CD8-positive, alpha-beta T cell (primary cell): ENCODE measurements at regions of chrX and their contacts with region 1.

Region 1: GRCh38 chrX:136694431-136695087 is 46.6 kb downstream of the CD40LG start:
- DNase-seq: peak in 5 of 9 experiments; percentile 13 to 81 (median 32)
- ATAC-seq: peak; percentile 66
- H3K4me3 ChIP-seq: no peak overlapping the region
- H3K4me3 Mint-ChIP-seq: peak overlapping the region; percentile 63
- H3K27ac ChIP-seq: peak overlapping the region; percentile 69 to 71
- H3K27ac Mint-ChIP-seq: peak overlapping the region; percentile 97
- H3K4me1 ChIP-seq: peaks cover 67% of the 10 kb centered on the region
- H3K4me1 Mint-ChIP-seq: peaks cover 71% of the 10 kb centered on the region
- H3K27me3 ChIP-seq: no peaks in the 10 kb centered on the region
- H3K27me3 Mint-ChIP-seq: no peaks in the 10 kb centered on the region
- CTCF ChIP-seq: peak; percentile 71

Region 2: DNA sequence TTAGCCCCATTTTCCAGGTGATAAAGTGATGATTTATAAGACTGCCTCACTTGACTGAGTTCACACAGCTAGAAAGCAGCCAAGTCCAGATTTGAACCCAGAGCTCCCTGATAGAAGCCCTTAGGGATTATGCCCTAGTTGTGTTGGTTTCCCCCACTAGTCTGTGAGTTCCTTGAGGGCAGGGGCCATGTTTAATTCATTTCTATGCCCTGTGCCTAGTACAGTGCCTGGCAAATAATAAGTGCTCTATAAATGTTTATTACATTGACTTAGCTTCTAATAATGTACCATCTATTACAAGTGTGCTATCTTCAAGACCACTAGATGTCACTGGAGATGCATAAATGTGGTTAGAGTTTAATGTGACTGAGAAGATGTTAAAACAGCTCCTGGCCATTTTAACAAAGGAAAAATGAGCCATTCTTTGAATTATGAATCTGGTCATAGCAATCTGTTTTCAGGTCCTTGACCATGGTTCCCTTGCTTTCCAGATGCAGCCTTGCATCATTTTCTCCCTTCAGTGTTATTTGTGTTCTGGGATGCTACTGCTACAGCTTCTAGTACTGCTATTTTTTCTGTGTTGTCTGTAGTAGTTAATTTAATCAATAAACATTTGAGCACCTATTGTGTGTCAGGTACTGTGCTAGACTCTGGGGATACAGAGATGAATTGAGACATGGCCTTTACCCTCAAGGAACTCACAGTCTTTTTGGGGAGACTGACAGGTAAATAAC is 666.1 kb before region 1 on chrX:
- CTCF ChIA-PET with region 1: interaction called, 3 read pairs
- POLR2A ChIA-PET with region 1: no interaction called
- intact Hi-C with region 1: loop called in 1 of 2 experiments (anchors 5 kb)
- DNase-seq: peak in 2 of 9 experiments; percentile 52 to 68
- ATAC-seq: peak; percentile 42
- H3K4me3 ChIP-seq: no peak overlapping the region
- H3K4me3 Mint-ChIP-seq: no peak overlapping the region
- H3K27ac ChIP-seq: no peak overlapping the region
- H3K27ac Mint-ChIP-seq: no peak overlapping the region
- H3K4me1 ChIP-seq: no peaks in the 10 kb centered on the region
- H3K4me1 Mint-ChIP-seq: no peaks in the 10 kb centered on the region
- H3K27me3 ChIP-seq: no peaks in the 10 kb centered on the region
- H3K27me3 Mint-ChIP-seq: no peaks in the 10 kb centered on the region
- CTCF ChIP-seq: peak; percentile 55

Region 3: DNA sequence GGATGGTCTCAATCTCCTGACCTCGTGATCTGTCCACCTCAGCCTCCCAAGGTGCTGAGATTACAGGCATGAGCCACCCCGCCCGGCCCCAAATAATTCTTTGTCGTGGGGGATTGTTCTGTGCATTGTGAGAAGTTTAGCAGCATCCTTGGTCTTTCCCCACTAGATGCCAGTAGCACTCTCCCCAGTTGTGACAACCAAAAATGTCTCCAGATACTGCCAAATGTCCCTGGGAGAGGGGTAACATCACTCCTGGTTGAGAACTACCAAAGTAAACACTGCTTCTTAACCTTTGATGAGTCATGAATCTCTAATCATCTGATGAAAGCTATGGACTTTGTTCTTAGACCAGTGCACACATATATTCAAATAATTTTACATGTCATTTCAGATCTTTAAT is 297.6 kb before region 1 on chrX:
- CTCF ChIA-PET with region 1: no interaction called
- POLR2A ChIA-PET with region 1: no interaction called
- intact Hi-C with region 1: loop called in 1 of 2 experiments (anchors 10 kb)
- DNase-seq: peak in 2 of 9 experiments; percentile 1 to 3
- ATAC-seq: no peak
- H3K4me3 ChIP-seq: no peak overlapping the region
- H3K4me3 Mint-ChIP-seq: no peak overlapping the region
- H3K27ac ChIP-seq: no peak overlapping the region
- H3K27ac Mint-ChIP-seq: no peak overlapping the region
- H3K4me1 ChIP-seq: no peaks in the 10 kb centered on the region
- H3K4me1 Mint-ChIP-seq: no peaks in the 10 kb centered on the region
- H3K27me3 ChIP-seq: no peaks in the 10 kb centered on the region
- H3K27me3 Mint-ChIP-seq: no peaks in the 10 kb centered on the region
- CTCF ChIP-seq: no peak

Region 4: DNA sequence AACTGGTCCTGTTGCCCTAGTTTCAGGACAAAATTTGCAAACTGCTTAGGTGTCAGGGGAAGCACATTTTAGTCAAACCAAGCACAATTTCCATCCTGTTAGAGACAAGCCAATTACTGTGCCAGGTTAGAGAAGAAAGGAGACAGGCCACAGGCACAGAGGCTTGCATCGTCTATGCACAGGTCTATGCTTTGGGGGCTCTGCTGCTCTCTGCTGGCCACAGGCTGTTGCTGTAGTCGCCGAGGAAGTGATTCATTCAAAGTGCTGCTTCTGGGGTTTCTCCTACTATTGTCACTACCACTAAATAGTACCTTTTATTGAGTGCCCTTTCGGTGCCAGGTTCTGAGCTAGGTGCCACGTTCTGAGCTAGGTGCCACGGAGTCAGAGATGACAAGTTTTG is 117.0 kb before region 1 on chrX:
- CTCF ChIA-PET with region 1: interaction called, 44 read pairs
- POLR2A ChIA-PET with region 1: no interaction called
- intact Hi-C with region 1: loop called (anchors 1 to 2 kb)
- DNase-seq: peak; percentile 30 to 79 (median 62)
- ATAC-seq: peak; percentile 99
- H3K4me3 ChIP-seq: no peak overlapping the region
- H3K4me3 Mint-ChIP-seq: no peak overlapping the region
- H3K27ac ChIP-seq: no peak overlapping the region
- H3K27ac Mint-ChIP-seq: peak overlapping the region; percentile 46
- H3K4me1 ChIP-seq: peaks cover 3% of the 10 kb centered on the region
- H3K4me1 Mint-ChIP-seq: peaks cover 7% of the 10 kb centered on the region
- H3K27me3 ChIP-seq: no peaks in the 10 kb centered on the region
- H3K27me3 Mint-ChIP-seq: no peaks in the 10 kb centered on the region
- CTCF ChIP-seq: peak; percentile 55

Region 5: GRCh38 chrX:136626237-136626636 is 68.3 kb before region 1 on chrX:
- CTCF ChIA-PET with region 1: interaction called, 8 read pairs
- POLR2A ChIA-PET with region 1: no interaction called
- intact Hi-C with region 1: loop called in 1 of 2 experiments (anchors 5 kb)
- DNase-seq: no peak
- ATAC-seq: no peak
- H3K4me3 ChIP-seq: no peak overlapping the region
- H3K4me3 Mint-ChIP-seq: peak overlapping the region; percentile 11
- H3K27ac ChIP-seq: peak overlapping the region in 1 of 2 experiments; percentile 9
- H3K27ac Mint-ChIP-seq: no peak overlapping the region
- H3K4me1 ChIP-seq: peaks cover 83% of the 10 kb centered on the region
- H3K4me1 Mint-ChIP-seq: peaks cover 83% of the 10 kb centered on the region
- H3K27me3 ChIP-seq: no peaks in the 10 kb centered on the region
- H3K27me3 Mint-ChIP-seq: no peaks in the 10 kb centered on the region
- CTCF ChIP-seq: no peak

Region 6: DNA sequence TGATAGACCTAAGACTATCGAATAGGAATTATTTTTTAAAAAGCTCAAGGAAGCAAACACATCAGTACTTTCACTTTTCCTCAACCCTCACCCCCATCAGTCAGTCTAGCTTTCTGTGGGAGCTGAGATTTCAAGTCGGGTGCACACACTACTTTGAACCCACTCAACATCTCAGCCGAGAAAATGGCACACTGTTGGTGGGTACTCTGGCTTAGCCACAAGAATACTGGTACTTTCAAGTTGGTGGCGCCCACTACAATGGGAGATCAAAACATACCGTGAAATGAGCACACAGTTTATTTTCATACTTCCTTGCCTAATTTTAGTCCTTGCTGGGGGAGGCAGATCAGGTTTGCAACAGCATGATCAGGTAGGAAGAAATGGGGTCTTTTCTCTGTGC is 36.4 kb before region 1 on chrX:
- CTCF ChIA-PET with region 1: interaction called, 3 read pairs
- POLR2A ChIA-PET with region 1: interaction called, 3 read pairs
- intact Hi-C with region 1: loop called in 1 of 2 experiments (anchors 5 kb)
- DNase-seq: peak in 1 of 9 experiments; percentile 24
- ATAC-seq: peak; percentile 23
- H3K4me3 ChIP-seq: no peak overlapping the region
- H3K4me3 Mint-ChIP-seq: peak overlapping the region; percentile 69
- H3K27ac ChIP-seq: peak overlapping the region in 1 of 2 experiments; percentile 19
- H3K27ac Mint-ChIP-seq: peak overlapping the region; percentile 89
- H3K4me1 ChIP-seq: peaks cover 54% of the 10 kb centered on the region
- H3K4me1 Mint-ChIP-seq: peaks cover 64% of the 10 kb centered on the region
- H3K27me3 ChIP-seq: no peaks in the 10 kb centered on the region
- H3K27me3 Mint-ChIP-seq: no peaks in the 10 kb centered on the region
- CTCF ChIP-seq: no peak

Region 7: GRCh38 chrX:136920001-136920400 is 225.4 kb after region 1 on chrX:
- CTCF ChIA-PET with region 1: interaction called, 7 read pairs
- POLR2A ChIA-PET with region 1: no interaction called
- intact Hi-C with region 1: loop called in 1 of 2 experiments (anchors 5 kb)
- DNase-seq: no peak
- ATAC-seq: no peak
- H3K4me3 ChIP-seq: no peak overlapping the region
- H3K4me3 Mint-ChIP-seq: no peak overlapping the region
- H3K27ac ChIP-seq: no peak overlapping the region
- H3K27ac Mint-ChIP-seq: no peak overlapping the region
- H3K4me1 ChIP-seq: no peaks in the 10 kb centered on the region
- H3K4me1 Mint-ChIP-seq: peaks cover 2% of the 10 kb centered on the region
- H3K27me3 ChIP-seq: no peaks in the 10 kb centered on the region
- H3K27me3 Mint-ChIP-seq: no peaks in the 10 kb centered on the region
- CTCF ChIP-seq: no peak